GM23248 (cell line): ENCODE measurements at regions of chr10 and their contacts with region 1.

Region 1: DNA sequence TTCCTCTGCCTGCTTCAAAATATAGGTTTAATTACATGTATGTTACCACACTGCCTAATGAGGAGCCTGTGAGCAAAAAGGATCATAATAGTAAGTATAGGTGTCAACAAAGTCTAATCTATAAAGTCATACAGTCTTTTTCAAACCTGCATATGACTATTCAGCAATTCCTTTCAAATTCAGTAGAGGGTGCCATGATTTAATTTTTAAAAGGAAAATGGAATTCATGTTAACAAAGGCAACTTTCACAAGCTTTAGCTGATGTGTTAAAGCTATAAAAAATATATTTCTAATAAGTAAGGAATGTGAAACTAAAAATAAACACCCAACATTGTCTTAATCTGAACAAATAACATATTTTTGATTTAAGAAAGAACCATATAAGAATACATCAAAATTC is 52.1 kb downstream of the MPP7 start:
- DNase-seq: peak; percentile 59
- H3K4me3 ChIP-seq: no peak overlapping the region
- H3K27ac ChIP-seq: no peak overlapping the region
- H3K4me1 ChIP-seq: 0 out of 2 replicates have a peak, but pooled peaks cover 7% of the 10 kb centered on the region
- H3K27me3 ChIP-seq: no peaks in the 10 kb centered on the region; the same call in 1 of the 2 replicates

Region 2: GRCh38 chr10:28381903-28382347 is 131.1 kb after region 1 on chr10:
- in situ Hi-C with region 1: loop called (anchors 5 kb)
- DNase-seq: peak; percentile 85
- H3K4me3 ChIP-seq: no peak overlapping the region
- H3K27ac ChIP-seq: no peak overlapping the region
- H3K4me1 ChIP-seq: no peaks in the 10 kb centered on the region
- H3K27me3 ChIP-seq: peaks cover 41% of the 10 kb centered on the region